Gastrocnemius medialis (tissue), 4 donors: ENCODE measurements at regions of chrX and their contacts with region 1.

Region 1: DNA sequence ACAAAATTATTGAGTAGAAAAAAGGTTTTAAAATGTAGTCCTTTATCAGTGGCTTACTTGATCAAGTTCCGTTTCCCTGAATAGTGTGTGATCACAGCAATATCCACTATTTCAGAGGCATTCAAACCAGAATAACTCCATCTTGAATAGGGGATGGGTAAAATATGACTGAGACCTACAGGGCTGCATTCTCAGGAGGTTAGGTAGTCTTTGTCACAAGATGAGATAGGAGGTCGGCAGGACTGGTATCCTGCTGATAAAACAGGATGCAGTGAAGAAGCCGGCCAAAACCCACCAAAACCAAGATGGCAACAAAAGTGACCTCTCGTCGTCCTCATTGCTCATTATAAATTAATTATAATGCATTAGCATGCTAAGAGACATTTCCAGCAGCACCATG is 24.7 kb downstream of the TSPAN6 start:
- DNase-seq: no peak
- ATAC-seq: no peak
- H3K4me3 ChIP-seq: no peak overlapping the region
- H3K27ac ChIP-seq: no peak overlapping the region
- H3K4me1 ChIP-seq: no peaks in the 10 kb centered on the region
- H3K27me3 ChIP-seq: no peaks in the 10 kb centered on the region
- CTCF ChIP-seq: no peak
- POLR2A ChIP-seq: no peak

Region 2: GRCh38 chrX:100512471-100512870 is 99.5 kb before region 1 on chrX:
- in situ Hi-C with region 1: no loop called
- intact Hi-C with region 1: loop called (anchors 5 kb)
- DNase-seq: no peak
- ATAC-seq: no peak
- H3K4me3 ChIP-seq: no peak overlapping the region
- H3K27ac ChIP-seq: no peak overlapping the region
- H3K4me1 ChIP-seq: no peaks in the 10 kb centered on the region
- H3K27me3 ChIP-seq: no peaks in the 10 kb centered on the region
- CTCF ChIP-seq: peak in 4 of 5 experiments; percentile 16 to 65 (median 24)
- POLR2A ChIP-seq: no peak